ENCODE measurements at regions of chr6 and their contacts with region 1.

Region 1: DNA sequence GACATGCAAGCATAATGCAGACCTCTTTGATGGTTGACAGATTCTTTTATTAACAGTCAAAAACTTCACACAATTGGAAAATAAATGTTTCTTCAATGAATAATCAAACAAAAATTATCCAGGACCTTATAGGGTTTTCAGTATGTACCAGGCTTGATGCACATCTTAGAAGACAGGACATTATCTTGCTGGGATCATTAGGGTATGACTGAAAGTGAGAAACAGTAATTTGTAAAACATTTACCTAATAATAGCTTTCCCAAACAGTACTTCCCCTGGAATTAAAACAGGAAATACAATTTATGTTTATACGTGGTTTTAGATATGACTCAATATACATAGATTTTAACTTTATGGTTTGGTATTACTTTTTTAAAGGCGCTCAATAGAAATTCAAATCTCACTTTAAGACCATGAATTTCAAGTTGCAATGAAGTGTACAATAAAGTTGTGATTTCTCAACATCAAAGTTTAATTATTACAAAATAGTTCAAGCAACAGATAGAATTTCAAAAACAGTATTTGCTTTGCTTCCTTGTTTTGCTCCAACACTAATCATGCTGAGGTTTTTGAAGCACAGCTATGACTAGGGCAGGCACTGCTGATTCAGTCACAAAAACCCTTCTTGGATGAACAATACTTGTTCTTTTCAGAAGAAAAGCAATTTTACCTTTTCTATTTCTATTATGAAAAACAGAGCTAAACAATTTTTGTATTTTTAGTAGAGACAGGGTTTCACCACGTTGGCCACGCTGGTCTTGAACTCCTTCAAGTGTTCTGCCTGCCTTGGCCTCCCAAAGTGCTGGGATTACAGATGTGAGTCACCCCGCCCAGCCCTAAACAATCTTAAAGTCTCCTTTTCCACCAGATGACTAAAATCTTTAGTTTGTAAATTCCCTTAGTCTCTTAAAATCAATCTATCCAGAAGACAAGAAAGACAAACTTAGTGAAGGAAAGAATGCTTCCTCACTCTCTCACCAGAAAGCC is 13.7 kb downstream of the SOD2 start:
- DNase-seq: no peak
- ATAC-seq: no peak
- H3K4me3 ChIP-seq: no peak overlapping the region
- H3K4me3 Mint-ChIP-seq: no peak overlapping the region
- H3K27ac ChIP-seq: no peak overlapping the region
- H3K27ac Mint-ChIP-seq: no peak overlapping the region
- H3K4me1 ChIP-seq: no peaks in the 10 kb centered on the region
- H3K4me1 Mint-ChIP-seq: peaks cover 8% of the 10 kb centered on the region
- H3K27me3 ChIP-seq: no peaks in the 10 kb centered on the region
- H3K27me3 Mint-ChIP-seq: no peaks in the 10 kb centered on the region
- CTCF ChIP-seq: no peak

Region 2: GRCh38 chr6:159665868-159666635 is 13.3 kb before region 1 on chr6:
- CTCF ChIA-PET with region 1: interaction called, 5 read pairs
- POLR2A ChIA-PET with region 1: no interaction called
- intact Hi-C with region 1: loop called in 1 of 2 experiments (anchors 2 kb)
- DNase-seq: no peak
- ATAC-seq: no peak
- H3K4me3 ChIP-seq: no peak overlapping the region
- H3K4me3 Mint-ChIP-seq: no peak overlapping the region
- H3K27ac ChIP-seq: no peak overlapping the region
- H3K27ac Mint-ChIP-seq: no peak overlapping the region
- H3K4me1 ChIP-seq: no peaks in the 10 kb centered on the region
- H3K4me1 Mint-ChIP-seq: no peaks in the 10 kb centered on the region
- H3K27me3 ChIP-seq: no peaks in the 10 kb centered on the region
- H3K27me3 Mint-ChIP-seq: no peaks in the 10 kb centered on the region
- CTCF ChIP-seq: no peak

Region 3: DNA sequence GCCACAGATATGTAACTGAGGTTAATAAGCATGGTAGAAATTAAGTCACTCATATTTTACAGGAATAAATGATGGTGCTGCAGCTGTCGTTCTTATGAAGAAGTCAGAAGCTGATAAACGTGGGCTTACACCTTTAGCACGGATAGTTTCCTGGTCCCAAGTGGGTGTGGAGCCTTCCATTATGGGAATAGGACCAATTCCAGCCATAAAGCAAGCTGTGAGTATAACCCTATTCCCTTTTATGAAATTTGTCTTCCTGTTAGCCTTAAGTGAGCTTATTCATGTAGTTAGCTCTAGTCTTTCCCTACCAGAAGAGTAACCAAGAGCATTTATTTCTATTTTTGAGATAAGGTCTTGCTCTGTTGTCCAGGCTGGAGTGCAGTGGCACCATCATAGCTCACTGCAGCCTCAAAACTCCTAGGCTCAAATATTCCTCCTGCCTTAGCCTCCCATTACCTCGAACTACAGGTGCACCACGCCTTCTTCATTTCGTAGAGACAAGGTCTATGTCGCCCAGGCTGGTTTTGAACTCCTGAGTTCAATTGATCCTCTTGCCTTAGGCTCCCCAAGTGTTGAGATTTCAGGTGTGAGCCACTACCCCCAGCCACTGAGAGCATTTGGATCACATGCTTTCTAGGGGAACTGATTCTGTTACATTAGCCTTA is 98.0 kb after region 1 on chr6:
- CTCF ChIA-PET with region 1: no interaction called
- POLR2A ChIA-PET with region 1: no interaction called
- intact Hi-C with region 1: no loop called
- DNase-seq: no peak
- ATAC-seq: no peak
- H3K4me3 ChIP-seq: no peak overlapping the region
- H3K4me3 Mint-ChIP-seq: no peak overlapping the region
- H3K27ac ChIP-seq: no peak overlapping the region
- H3K27ac Mint-ChIP-seq: no peak overlapping the region
- H3K4me1 ChIP-seq: no peaks in the 10 kb centered on the region
- H3K4me1 Mint-ChIP-seq: peaks cover 7% of the 10 kb centered on the region
- H3K27me3 ChIP-seq: no peaks in the 10 kb centered on the region
- H3K27me3 Mint-ChIP-seq: no peaks in the 10 kb centered on the region
- CTCF ChIP-seq: no peak

Region 4: GRCh38 chr6:160041608-160042007 is 362.2 kb after region 1 on chr6:
- CTCF ChIA-PET with region 1: no interaction called
- POLR2A ChIA-PET with region 1: no interaction called
- intact Hi-C with region 1: loop called in 1 of 2 experiments (anchors 10 kb)
- DNase-seq: peak in 2 of 9 experiments; percentile 27 to 34
- ATAC-seq: peak; percentile 51
- H3K4me3 ChIP-seq: no peak overlapping the region
- H3K4me3 Mint-ChIP-seq: no peak overlapping the region
- H3K27ac ChIP-seq: no peak overlapping the region
- H3K27ac Mint-ChIP-seq: no peak overlapping the region
- H3K4me1 ChIP-seq: peaks cover 3% of the 10 kb centered on the region
- H3K4me1 Mint-ChIP-seq: peaks cover 18% of the 10 kb centered on the region
- H3K27me3 ChIP-seq: no peaks in the 10 kb centered on the region
- H3K27me3 Mint-ChIP-seq: no peaks in the 10 kb centered on the region
- CTCF ChIP-seq: no peak

Region 5: GRCh38 chr6:160102956-160103824 is 423.8 kb after region 1 on chr6:
- CTCF ChIA-PET with region 1: no interaction called
- POLR2A ChIA-PET with region 1: no interaction called
- intact Hi-C with region 1: loop called in 1 of 2 experiments (anchors 10 kb)
- DNase-seq: peak in 2 of 9 experiments; percentile 31 to 49
- ATAC-seq: no peak
- H3K4me3 ChIP-seq: no peak overlapping the region
- H3K4me3 Mint-ChIP-seq: no peak overlapping the region
- H3K27ac ChIP-seq: no peak overlapping the region
- H3K27ac Mint-ChIP-seq: no peak overlapping the region
- H3K4me1 ChIP-seq: no peaks in the 10 kb centered on the region
- H3K4me1 Mint-ChIP-seq: peaks cover 12% of the 10 kb centered on the region
- H3K27me3 ChIP-seq: no peaks in the 10 kb centered on the region
- H3K27me3 Mint-ChIP-seq: no peaks in the 10 kb centered on the region
- CTCF ChIP-seq: peak; percentile 22

Measured in CD8-positive, alpha-beta T cell (primary cell).